ENCODE measurements at regions of chr16 and their contacts with region 1.

Region 1: DNA sequence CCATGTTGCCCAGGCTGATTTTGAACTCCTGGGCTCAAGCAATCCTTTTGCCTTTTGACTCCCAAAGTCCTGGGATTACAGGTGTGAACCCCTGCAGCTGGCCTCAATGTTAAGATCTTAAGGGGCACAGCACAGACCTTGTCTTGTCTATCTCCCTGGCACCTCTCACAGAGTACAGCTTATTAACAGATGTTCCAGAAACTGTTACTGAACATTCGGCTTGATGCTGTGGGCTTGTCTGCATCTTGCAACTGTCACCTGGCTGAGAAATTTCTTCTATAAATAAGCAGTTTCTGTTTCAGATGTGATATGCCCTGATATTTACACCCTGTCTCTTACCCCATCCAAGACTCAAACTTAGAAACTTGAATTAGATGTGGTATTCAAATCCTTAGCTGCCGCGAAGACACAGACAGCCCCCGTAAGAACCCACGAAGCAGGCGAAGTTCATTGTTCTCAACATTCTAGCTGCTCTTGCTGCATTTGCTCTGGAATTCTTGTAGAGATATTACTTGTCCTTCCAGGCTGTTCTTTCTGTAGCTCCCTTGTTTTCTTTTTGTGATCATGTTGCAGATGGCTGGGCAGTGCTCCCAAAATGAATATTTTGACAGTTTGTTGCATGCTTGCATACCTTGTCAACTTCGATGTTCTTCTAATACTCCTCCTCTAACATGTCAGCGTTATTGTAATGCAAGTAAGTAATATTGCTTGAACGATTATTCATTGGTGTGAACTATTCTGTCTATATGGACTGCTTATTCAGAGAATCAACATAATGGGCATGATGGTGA is at the start of gene TNFRSF17:
- DNase-seq: peak; percentile 94
- ATAC-seq: peak; percentile 70
- H3K4me3 ChIP-seq: peak within 1 kb of the TSS; percentile 78
- H3K27ac ChIP-seq: peak within 1 kb of the TSS; percentile 95
- H3K4me1 ChIP-seq: peaks cover 30% of the 10 kb centered on the region
- H3K27me3 ChIP-seq: no peaks in the 10 kb centered on the region
- CTCF ChIP-seq: no peak
- EP300 ChIP-seq: peak; percentile 86 to 95
- POLR2A ChIP-seq: peak; percentile 60
- RAD21 ChIP-seq: no peak; the same call in 1 of the 2 replicates
- polyA plus RNA-seq, gene TNFRSF17: 453 to 461 TPM

Region 2: DNA sequence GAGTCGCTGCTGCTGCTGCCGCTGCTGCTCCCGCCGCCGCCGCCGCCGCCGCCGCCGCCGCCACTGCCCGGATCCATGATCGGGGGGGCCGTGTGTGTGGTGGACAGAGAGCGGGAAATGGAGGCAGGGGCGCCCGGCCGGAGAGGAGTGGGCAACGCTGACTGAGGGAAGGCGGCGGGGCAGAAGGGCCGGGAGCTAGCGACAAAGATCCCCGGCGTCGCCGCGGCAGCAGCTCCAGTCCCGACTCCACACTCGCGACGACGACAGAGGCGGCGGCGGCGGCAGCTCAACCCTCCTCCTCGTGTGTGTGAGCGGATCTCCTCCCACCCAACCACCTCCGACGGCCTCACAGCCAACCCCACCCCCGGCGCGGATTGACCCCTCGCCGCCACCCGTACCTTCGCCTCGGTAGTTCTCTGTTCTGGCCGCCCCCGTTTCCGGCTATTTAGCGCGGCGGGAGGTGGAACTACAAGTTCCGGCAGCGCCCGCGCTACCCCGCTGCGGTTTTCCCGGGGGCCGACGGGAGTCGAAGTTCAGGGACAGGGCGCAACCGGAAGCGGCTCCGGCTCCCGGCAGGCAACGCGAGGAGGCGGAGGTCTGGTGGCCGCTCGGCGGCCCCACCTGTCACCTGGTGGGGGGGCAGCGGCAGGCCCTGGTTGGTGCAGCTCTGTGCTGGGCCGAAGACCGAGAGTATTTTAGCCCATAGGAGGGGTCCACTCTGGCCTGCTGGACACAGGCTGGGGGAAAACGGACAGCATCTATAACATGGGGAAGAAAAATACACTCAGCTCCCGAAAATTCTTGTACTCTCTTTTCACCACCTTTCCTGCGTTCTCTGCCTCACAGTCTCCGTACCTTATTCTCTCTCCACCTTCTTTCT is 49.1 kb before region 1 on chr16 and contains the start of gene GSPT1:
- CTCF ChIA-PET with region 1: interaction called, 4 read pairs
- POLR2A ChIA-PET with region 1: interaction called, 7 read pairs
- RAD21 ChIA-PET with region 1: no interaction called
- SMC1A ChIA-PET with region 1: interaction called, 3 read pairs
- in situ Hi-C with region 1: no loop called
- intact Hi-C with region 1: loop called (anchors 5 kb)
- DNase-seq: peak; percentile 90
- ATAC-seq: peak; percentile 89
- H3K4me3 ChIP-seq: peak within 1 kb of the TSS; percentile 71
- H3K27ac ChIP-seq: peak within 1 kb of the TSS; percentile 87
- H3K4me1 ChIP-seq: peaks cover 9% of the 10 kb centered on the region
- H3K27me3 ChIP-seq: no peaks in the 10 kb centered on the region
- CTCF ChIP-seq: 0 out of 6 replicates have a peak, but pooled peaks of 2 of the 3 experiments have one; percentile 16 to 17
- EP300 ChIP-seq: no peak
- POLR2A ChIP-seq: peak; percentile 92
- RAD21 ChIP-seq: no peak
- polyA plus RNA-seq, gene GSPT1: 46.7 to 63.5 TPM

Region 3: DNA sequence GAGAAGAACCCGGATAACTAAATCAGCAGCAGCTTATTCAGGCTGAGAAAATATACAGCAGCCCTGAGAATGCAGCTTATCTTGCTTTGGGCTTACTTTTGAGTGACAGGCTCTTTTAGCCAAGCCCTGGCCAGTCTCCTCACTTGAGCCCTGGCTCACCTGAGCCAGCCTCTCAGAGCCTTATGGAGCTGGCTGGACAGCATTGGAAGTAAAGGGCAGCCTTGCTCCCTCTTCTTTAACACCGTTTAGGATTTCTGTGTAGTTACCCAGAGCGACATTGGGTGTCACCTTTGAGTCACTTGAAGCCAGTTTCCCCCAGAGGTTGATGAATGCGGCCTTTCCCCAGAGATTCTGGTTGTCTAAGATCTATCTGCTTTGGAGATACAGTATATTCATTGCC is 15.4 kb before region 1 on chr16:
- CTCF ChIA-PET with region 1: interaction called, 18 read pairs
- POLR2A ChIA-PET with region 1: interaction called, 6 read pairs
- RAD21 ChIA-PET with region 1: interaction called, 16 read pairs
- SMC1A ChIA-PET with region 1: interaction called, 20 read pairs
- in situ Hi-C with region 1: no loop called
- intact Hi-C with region 1: no loop called
- DNase-seq: no peak
- ATAC-seq: peak; percentile 99
- H3K4me3 ChIP-seq: no peak overlapping the region
- H3K27ac ChIP-seq: no peak overlapping the region
- H3K4me1 ChIP-seq: peaks cover 9% of the 10 kb centered on the region
- H3K27me3 ChIP-seq: no peaks in the 10 kb centered on the region
- CTCF ChIP-seq: peak; percentile 73 to 82 (median 75)
- EP300 ChIP-seq: no peak
- POLR2A ChIP-seq: no peak
- RAD21 ChIP-seq: peak; percentile 97

Region 4: DNA sequence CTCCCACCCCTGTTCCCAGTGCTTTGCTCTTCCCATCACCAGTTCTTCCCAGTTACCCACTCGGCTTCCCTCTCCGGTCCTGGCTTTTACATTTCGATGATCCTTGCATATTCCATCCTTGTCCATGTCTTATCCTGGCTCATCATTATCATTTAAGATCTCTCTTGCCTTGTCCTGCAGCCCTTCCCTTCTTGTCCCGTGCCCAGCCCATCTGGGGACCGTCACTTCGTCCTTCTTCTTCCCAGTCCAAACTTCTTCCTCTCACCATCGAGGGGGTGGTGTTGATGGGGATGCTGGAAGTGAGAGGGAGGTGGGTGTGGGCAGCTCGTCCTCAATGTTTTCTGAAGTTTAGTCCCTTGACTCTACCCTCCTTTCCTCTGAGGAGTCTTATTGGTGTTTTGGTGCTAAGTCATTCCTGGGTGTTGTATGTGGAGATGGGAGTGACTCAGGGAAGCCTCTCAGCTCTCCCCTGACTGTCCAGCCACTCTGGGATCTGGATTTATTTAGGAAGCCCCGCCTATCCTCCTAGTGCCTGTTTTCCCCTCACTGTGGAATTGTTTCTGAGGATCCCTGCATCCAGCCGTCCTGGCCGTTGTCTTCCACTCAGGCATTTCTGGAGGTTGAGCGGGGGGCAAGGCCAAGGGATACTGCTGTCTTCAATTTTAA is 12.6 kb after region 1 on chr16:
- CTCF ChIA-PET with region 1: interaction called, 73 read pairs
- POLR2A ChIA-PET with region 1: interaction called, 171 read pairs
- RAD21 ChIA-PET with region 1: interaction called, 162 read pairs
- SMC1A ChIA-PET with region 1: interaction called, 162 read pairs
- in situ Hi-C with region 1: no loop called
- intact Hi-C with region 1: loop called (anchors 1 kb)
- DNase-seq: no peak
- ATAC-seq: no peak
- H3K4me3 ChIP-seq: peak overlapping the region; percentile 96
- H3K27ac ChIP-seq: peak overlapping the region; percentile 88
- H3K4me1 ChIP-seq: peaks cover 14% of the 10 kb centered on the region
- H3K27me3 ChIP-seq: no peaks in the 10 kb centered on the region
- CTCF ChIP-seq: no peak
- EP300 ChIP-seq: no peak
- POLR2A ChIP-seq: no peak
- RAD21 ChIP-seq: no peak

Region 5: GRCh38 chr16:11985250-11985649 is 20.3 kb after region 1 on chr16:
- CTCF ChIA-PET with region 1: interaction called, 73 read pairs
- POLR2A ChIA-PET with region 1: interaction called, 171 read pairs
- RAD21 ChIA-PET with region 1: interaction called, 162 read pairs
- SMC1A ChIA-PET with region 1: interaction called, 162 read pairs
- in situ Hi-C with region 1: no loop called
- intact Hi-C with region 1: loop called (anchors 1 kb)
- DNase-seq: no peak
- ATAC-seq: no peak
- H3K4me3 ChIP-seq: no peak overlapping the region
- H3K27ac ChIP-seq: no peak overlapping the region
- H3K4me1 ChIP-seq: peaks cover 11% of the 10 kb centered on the region
- H3K27me3 ChIP-seq: no peaks in the 10 kb centered on the region
- CTCF ChIP-seq: no peak
- EP300 ChIP-seq: no peak
- POLR2A ChIP-seq: no peak
- RAD21 ChIP-seq: no peak

Region 6: GRCh38 chr16:11994143-11995119 is 29.5 kb after region 1 on chr16:
- CTCF ChIA-PET with region 1: interaction called, 6 read pairs
- POLR2A ChIA-PET with region 1: interaction called, 11 read pairs
- RAD21 ChIA-PET with region 1: interaction called, 16 read pairs
- SMC1A ChIA-PET with region 1: interaction called, 43 read pairs
- in situ Hi-C with region 1: no loop called
- intact Hi-C with region 1: no loop called
- DNase-seq: no peak
- ATAC-seq: peak; percentile 69
- H3K4me3 ChIP-seq: no peak overlapping the region
- H3K27ac ChIP-seq: peak overlapping the region; percentile 38; the same call in 1 of the 2 replicates
- H3K4me1 ChIP-seq: peaks cover 7% of the 10 kb centered on the region
- H3K27me3 ChIP-seq: no peaks in the 10 kb centered on the region
- CTCF ChIP-seq: peak in 1 of 3 experiments; percentile 10; a peak in 1 of 6 replicates
- EP300 ChIP-seq: no peak
- POLR2A ChIP-seq: no peak
- RAD21 ChIP-seq: no peak

Region 7: DNA sequence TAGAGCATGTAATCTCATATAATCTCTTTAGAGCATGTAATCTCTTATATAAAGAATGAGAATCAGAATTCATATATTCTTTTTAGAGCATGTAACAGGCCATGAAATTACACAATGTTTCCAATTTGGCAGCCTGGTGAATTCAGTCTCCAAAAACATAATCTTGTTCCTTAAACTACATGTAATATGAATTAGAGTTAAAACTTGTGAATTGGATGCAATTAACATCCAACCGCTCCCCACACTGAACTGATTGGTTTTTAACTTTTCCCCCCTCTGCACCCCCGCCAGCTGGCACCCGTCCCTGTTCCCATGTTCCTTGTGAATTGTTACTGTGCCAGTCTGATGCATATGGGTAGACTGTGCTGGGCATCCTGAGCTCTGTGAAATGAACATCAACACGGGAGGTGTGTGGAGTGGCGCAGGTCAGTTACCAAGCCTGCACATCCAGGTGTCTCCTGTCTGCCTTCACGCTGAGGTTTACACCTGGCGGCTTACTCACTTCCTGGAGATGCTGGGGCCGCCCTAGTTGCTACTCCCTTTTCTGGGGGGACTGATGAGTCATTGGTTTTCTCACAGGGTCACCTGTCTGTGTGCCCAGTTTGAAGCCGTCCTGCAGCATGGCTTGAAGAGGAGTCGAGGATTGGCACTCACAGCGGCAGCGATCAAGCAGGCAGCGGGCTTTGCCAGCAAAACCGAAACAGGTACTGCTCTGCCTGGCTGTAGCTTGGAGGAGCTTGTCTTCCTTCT is 62.0 kb after region 1 on chr16:
- CTCF ChIA-PET with region 1: interaction called, 4 read pairs
- POLR2A ChIA-PET with region 1: no interaction called
- RAD21 ChIA-PET with region 1: interaction called, 4 read pairs
- SMC1A ChIA-PET with region 1: interaction called, 4 read pairs
- in situ Hi-C with region 1: no loop called
- intact Hi-C with region 1: loop called (anchors 10 kb)
- DNase-seq: no peak
- ATAC-seq: peak; percentile 82
- H3K4me3 ChIP-seq: no peak overlapping the region
- H3K27ac ChIP-seq: no peak overlapping the region; the same call in 1 of the 2 replicates
- H3K4me1 ChIP-seq: peaks cover 16% of the 10 kb centered on the region
- H3K27me3 ChIP-seq: no peaks in the 10 kb centered on the region
- CTCF ChIP-seq: no peak
- EP300 ChIP-seq: no peak
- POLR2A ChIP-seq: no peak
- RAD21 ChIP-seq: no peak